AG04450 (cell line): ENCODE measurements at regions of chr16 and their contacts with region 1.

Region 1: DNA sequence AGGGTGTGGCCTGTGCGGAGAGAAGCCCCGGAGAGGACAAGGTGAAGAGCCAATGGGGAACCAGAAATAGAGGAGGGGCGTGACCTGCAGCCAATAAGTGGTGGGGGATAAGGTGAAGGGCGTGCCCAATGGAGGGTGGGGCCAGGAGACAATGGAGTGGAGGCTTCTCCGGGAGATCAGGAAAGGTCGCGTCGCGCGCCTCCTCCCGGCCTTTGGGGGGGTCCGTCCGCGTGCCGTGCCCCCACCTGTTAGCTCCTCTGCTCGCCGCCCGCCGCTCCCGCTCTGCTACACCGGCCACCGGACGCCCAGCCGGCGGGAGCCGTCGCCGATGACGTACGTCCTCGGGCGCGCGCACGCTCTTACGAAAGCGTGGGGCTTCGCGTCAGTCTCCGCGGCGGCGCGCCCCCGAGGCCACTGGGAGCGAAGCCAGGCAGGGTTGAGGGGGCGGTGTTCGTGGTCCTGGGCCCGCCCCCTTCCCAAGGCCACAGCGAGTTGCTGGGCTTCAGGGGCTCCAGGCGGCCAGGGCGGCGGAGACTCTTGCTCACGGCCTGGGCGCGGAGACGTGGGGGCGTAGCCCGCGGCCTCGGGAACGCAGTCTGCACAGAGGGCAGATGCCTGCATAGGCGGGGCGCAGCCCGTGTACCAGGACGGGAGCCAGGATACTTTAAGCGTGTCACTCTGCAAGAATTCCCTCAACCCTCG is at the start of gene MATCAP1:
- DNase-seq: peak; percentile 90
- H3K4me3 ChIP-seq: peak within 1 kb of the TSS; percentile 71
- H3K27ac ChIP-seq: peak within 1 kb of the TSS; percentile 88
- H3K27me3 ChIP-seq: no peaks in the 10 kb centered on the region
- CTCF ChIP-seq: no peak
- polyA plus RNA-seq, gene MATCAP1: 13.9 and 18.1 TPM in 2 replicates

Region 2: DNA sequence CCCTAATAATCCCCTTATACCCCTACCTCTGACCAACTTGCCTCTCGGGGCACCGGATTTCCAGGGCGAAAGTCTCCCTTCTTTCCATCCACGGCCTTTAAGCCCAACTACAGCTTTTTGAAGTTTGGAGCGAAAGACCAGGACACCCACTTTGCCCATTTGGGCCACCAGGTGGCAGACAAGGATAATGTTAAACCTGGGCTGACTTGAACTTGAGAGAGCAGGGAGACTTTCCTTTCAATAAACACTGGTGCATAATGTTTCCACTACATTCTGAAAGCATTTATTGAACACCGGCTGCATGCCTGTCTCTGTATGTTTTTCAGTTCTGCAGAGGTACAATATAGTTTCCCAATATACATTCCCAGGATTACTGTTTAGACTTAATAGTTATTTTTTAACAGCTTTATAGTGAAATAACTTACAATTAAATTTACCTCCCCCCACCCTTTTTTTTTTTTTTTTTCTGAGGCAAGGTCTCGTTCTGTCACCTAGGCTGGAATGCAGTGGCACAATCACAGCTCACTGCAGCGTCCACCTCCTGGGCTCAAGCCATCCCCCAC is 229.6 kb before region 1 on chr16:
- CTCF ChIA-PET with region 1: interaction called, 18 read pairs
- POLR2A ChIA-PET with region 1: no interaction called
- DNase-seq: peak; percentile 59
- H3K4me3 ChIP-seq: no peak overlapping the region
- H3K27ac ChIP-seq: no peak overlapping the region
- H3K27me3 ChIP-seq: peaks cover 21% of the 10 kb centered on the region
- CTCF ChIP-seq: peak; percentile 89

Region 3: GRCh38 chr16:66977341-66978113 is 206.3 kb before region 1 on chr16:
- CTCF ChIA-PET with region 1: interaction called, 18 read pairs
- POLR2A ChIA-PET with region 1: no interaction called
- DNase-seq: peak; percentile 56
- H3K4me3 ChIP-seq: no peak overlapping the region
- H3K27ac ChIP-seq: no peak overlapping the region
- H3K27me3 ChIP-seq: no peaks in the 10 kb centered on the region
- CTCF ChIP-seq: peak; percentile 94

Region 4: DNA sequence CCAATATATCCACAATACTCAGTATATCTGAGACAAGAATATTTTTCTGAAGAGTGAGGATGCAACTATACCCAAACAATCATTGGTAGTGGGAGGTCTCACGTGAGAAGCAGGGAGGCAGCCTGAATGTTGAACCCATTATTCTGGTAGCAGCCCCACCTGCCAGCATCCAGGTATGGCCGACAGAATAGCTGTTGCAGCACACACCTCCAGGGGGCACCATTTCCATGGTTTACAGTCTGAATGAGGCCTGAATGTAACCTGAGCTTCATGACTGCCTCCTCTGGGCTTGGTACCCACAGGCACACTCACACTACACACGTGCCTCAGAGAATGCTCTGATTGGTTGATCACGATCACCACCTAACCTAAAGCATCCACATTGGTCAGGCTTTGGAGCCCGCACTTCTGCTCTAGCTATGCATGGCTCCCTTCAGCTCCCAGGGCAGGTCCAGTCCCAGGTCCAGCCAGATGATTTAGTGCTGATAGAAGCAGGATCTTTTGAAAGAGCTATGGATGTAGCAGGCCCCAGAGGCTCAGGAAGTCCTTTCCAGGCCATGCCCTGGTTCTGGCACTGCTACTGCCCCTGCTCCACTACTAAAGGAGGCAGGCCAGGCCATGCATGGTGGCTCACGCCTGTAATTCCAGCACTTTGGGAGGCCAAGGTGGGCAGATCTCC is 165.8 kb before region 1 on chr16:
- CTCF ChIA-PET with region 1: interaction called, 10 read pairs
- POLR2A ChIA-PET with region 1: interaction called, 3 read pairs
- DNase-seq: peak; percentile 77
- H3K4me3 ChIP-seq: no peak overlapping the region
- H3K27ac ChIP-seq: no peak overlapping the region
- H3K27me3 ChIP-seq: peaks cover 13% of the 10 kb centered on the region
- CTCF ChIP-seq: peak; percentile 74

Region 5: DNA sequence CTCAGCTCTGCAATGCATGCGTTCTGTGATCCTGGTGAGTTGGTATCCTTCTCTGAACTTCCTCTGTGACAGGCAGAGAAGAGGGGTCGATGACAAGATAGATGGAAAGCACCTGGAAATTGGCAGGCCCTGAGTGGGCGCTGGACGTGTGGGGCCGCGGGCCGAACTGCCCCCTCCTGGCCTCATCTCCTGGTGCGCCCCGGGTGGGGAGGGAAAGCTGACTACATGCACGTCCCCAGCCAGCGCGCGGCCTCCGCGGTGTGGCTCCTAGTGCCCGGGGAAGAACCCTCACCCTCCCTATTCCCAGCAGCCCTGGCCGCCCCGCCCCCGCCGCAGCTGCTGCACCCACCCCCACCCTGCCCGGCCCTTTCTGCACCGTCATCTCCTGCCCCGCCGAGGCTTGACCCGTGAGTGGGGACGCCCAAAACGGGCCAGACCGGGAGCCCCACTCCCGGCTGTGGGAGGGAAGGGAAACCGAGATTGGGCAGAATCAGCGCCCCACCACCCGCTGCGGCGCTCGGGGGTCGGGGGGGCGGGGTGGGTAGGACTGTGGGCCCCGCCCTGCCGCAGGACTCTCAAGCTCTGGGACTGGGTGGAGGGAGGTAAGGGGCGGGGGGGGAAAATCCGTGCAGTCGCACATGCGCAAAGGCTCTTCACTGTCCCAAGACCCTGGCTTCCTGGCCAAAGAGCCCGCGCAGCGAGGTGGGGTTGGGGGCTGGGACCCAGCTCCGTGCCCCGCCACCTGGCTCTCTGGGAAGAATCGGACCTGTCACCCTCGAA is 13.4 kb before region 1 on chr16 and contains the start of gene NOL3:
- CTCF ChIA-PET with region 1: interaction called, 7 read pairs
- POLR2A ChIA-PET with region 1: interaction called, 10 read pairs
- DNase-seq: peak; percentile 36
- H3K4me3 ChIP-seq: peak within 1 kb of the TSS; percentile 58
- H3K27ac ChIP-seq: peak within 1 kb of the TSS; percentile 80
- H3K27me3 ChIP-seq: peaks cover 25% of the 10 kb centered on the region
- CTCF ChIP-seq: no peak
- polyA plus RNA-seq, gene NOL3: 8.2 and 10.7 TPM in 2 replicates

Region 6: GRCh38 chr16:67204076-67204475 is 20.3 kb after region 1 on chr16:
- CTCF ChIA-PET with region 1: no interaction called
- POLR2A ChIA-PET with region 1: no interaction called
- DNase-seq: no peak
- H3K4me3 ChIP-seq: no peak overlapping the region
- H3K27ac ChIP-seq: no peak overlapping the region
- H3K27me3 ChIP-seq: no peaks in the 10 kb centered on the region
- CTCF ChIP-seq: no peak

Region 7: GRCh38 chr16:67296422-67296821 is 112.6 kb after region 1 on chr16:
- CTCF ChIA-PET with region 1: no interaction called
- POLR2A ChIA-PET with region 1: no interaction called
- DNase-seq: no peak
- H3K4me3 ChIP-seq: no peak overlapping the region
- H3K27ac ChIP-seq: no peak overlapping the region
- H3K27me3 ChIP-seq: no peaks in the 10 kb centered on the region
- CTCF ChIP-seq: no peak